Caco-2 (cell line): ENCODE measurements at regions of chr10 and their contacts with region 1.

Region 1: DNA sequence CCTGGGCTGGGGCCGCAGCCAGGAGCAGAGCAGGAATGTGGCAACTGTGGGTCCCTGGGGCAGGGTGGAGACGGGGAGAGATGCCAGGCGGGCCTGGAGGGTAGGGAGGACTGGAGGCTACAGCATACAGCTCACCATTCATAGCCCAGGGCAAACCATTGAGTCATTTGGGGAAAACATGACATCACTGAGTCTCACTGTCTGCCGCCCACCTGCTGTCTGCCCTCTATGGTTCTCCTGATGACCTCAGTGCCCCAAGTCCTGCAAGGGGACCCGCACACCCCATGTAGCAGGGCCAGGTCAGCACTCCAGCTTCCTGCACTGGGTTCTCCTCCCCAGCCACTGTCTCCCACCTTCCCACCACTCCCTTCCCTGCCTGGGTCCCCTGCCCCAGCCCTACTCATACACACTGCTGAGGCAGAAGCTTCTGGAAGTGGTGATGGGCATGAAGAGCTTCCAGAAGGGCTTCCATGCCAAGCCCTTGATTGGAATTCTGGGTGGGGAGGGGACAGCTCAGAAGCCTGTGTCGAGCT is 10.4 kb downstream of the CHST3 start:
- DNase-seq: no peak
- H3K4me3 ChIP-seq: no peak overlapping the region
- H3K4me3 Mint-ChIP-seq: no peak overlapping the region
- H3K27ac Mint-ChIP-seq: no peak overlapping the region
- H3K4me1 ChIP-seq: peaks cover 28% of the 10 kb centered on the region
- H3K4me1 Mint-ChIP-seq: peaks cover 26% of the 10 kb centered on the region
- H3K27me3 ChIP-seq: no peaks in the 10 kb centered on the region
- H3K27me3 Mint-ChIP-seq: no peaks in the 10 kb centered on the region
- CTCF ChIP-seq: no peak

Region 2: GRCh38 chr10:71462062-71462935 is 512.3 kb before region 1 on chr10:
- CTCF ChIA-PET with region 1: no interaction called
- POLR2A ChIA-PET with region 1: no interaction called
- intact Hi-C with region 1: no loop called
- DNase-seq: no peak
- H3K4me3 ChIP-seq: no peak overlapping the region
- H3K4me3 Mint-ChIP-seq: no peak overlapping the region
- H3K27ac Mint-ChIP-seq: no peak overlapping the region
- H3K4me1 ChIP-seq: no peaks in the 10 kb centered on the region
- H3K4me1 Mint-ChIP-seq: no peaks in the 10 kb centered on the region
- H3K27me3 ChIP-seq: peaks cover 3% of the 10 kb centered on the region; the same call in 1 of the 2 replicates
- H3K27me3 Mint-ChIP-seq: peaks cover 7% of the 10 kb centered on the region
- CTCF ChIP-seq: peak in 1 of 2 experiments; percentile 10

Region 3: GRCh38 chr10:71916827-71917226 is 57.7 kb before region 1 on chr10:
- CTCF ChIA-PET with region 1: interaction called, 5 read pairs
- POLR2A ChIA-PET with region 1: no interaction called
- intact Hi-C with region 1: loop called (anchors 1 kb)
- DNase-seq: no peak
- H3K4me3 ChIP-seq: no peak overlapping the region
- H3K4me3 Mint-ChIP-seq: no peak overlapping the region
- H3K27ac Mint-ChIP-seq: no peak overlapping the region
- H3K4me1 ChIP-seq: peaks cover 6% of the 10 kb centered on the region; the same call in 1 of the 2 replicates
- H3K4me1 Mint-ChIP-seq: peaks cover 12% of the 10 kb centered on the region
- H3K27me3 ChIP-seq: no peaks in the 10 kb centered on the region
- H3K27me3 Mint-ChIP-seq: no peaks in the 10 kb centered on the region
- CTCF ChIP-seq: no peak

Region 4: GRCh38 chr10:71957546-71958275 is 16.8 kb before region 1 on chr10:
- CTCF ChIA-PET with region 1: interaction called, 3 read pairs
- POLR2A ChIA-PET with region 1: no interaction called
- intact Hi-C with region 1: loop called (anchors 1 kb)
- DNase-seq: peak in 1 of 2 experiments; percentile 7
- H3K4me3 ChIP-seq: no peak overlapping the region
- H3K4me3 Mint-ChIP-seq: no peak overlapping the region
- H3K27ac Mint-ChIP-seq: peak overlapping the region; percentile 56
- H3K4me1 ChIP-seq: peaks cover 43% of the 10 kb centered on the region
- H3K4me1 Mint-ChIP-seq: peaks cover 35% of the 10 kb centered on the region
- H3K27me3 ChIP-seq: no peaks in the 10 kb centered on the region
- H3K27me3 Mint-ChIP-seq: no peaks in the 10 kb centered on the region
- CTCF ChIP-seq: no peak